Adrenal gland (tissue), 19 donors: ENCODE measurements at regions of chr16 and their contacts with region 1.

Region 1: DNA sequence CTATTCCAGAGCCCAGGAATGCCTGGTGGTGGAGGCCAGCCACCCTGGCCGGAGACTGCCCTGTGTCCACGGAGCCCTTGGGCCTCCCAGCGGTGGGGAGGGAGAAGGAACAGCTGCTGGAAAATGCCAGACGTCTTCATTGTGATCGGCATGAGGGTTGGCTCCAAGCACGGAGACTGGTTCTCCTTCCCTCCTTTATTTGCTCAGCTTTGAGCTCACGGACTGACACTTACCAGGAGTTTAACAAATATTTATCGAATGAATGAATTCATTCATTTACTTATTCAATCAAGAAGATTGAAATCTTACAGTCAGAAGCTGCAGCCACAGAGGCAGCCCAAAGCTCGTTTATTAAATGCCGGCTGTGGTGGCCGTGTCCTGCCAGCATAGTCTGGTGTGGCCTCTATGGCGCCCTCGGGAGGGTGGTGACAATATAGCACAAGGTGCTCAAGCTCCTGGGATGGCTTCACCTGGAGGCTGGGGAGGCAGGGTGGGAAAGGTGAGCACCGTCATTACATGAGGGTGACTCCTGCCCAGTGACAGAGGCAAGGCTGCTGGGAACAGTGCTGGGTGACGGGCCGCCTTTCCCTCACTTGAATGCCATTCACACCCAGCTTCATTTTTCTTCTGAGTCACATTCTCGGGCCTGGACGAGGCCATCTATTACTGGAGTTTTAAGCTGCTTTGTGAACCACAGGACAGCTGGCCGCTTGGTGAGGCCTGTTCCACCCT is 31.0 kb upstream of the JPH3 start:
- DNase-seq: peak; percentile 51 to 84 (median 74)
- H3K4me3 ChIP-seq: no peak overlapping the region
- H3K27ac ChIP-seq: peak overlapping the region in 4 of 5 donors; percentile 26 to 78 (median 68)
- H3K4me1 ChIP-seq: peaks cover 0 to 21% of the 10 kb centered on the region in 2 donors
- H3K27me3 ChIP-seq: no peaks in the 10 kb centered on the region
- CTCF ChIP-seq: peak in 4 of 6 experiments; percentile 37 to 56 (median 48)
- POLR2A ChIP-seq: no peak

Region 2: GRCh38 chr16:87416826-87417527 is 154.3 kb before region 1 on chr16:
- intact Hi-C with region 1: loop called in 1 of 2 experiments (anchors 5 kb)
- DNase-seq: peak in 6 of 7 donors; percentile 42 to 79 (median 62)
- H3K4me3 ChIP-seq: no peak overlapping the region
- H3K27ac ChIP-seq: no peak overlapping the region
- H3K4me1 ChIP-seq: no peaks in the 10 kb centered on the region
- H3K27me3 ChIP-seq: no peaks in the 10 kb centered on the region
- CTCF ChIP-seq: peak; percentile 48 to 74 (median 62)
- POLR2A ChIP-seq: no peak